ENCODE measurements at regions of chr16 and their contacts with region 1.

Region 1: DNA sequence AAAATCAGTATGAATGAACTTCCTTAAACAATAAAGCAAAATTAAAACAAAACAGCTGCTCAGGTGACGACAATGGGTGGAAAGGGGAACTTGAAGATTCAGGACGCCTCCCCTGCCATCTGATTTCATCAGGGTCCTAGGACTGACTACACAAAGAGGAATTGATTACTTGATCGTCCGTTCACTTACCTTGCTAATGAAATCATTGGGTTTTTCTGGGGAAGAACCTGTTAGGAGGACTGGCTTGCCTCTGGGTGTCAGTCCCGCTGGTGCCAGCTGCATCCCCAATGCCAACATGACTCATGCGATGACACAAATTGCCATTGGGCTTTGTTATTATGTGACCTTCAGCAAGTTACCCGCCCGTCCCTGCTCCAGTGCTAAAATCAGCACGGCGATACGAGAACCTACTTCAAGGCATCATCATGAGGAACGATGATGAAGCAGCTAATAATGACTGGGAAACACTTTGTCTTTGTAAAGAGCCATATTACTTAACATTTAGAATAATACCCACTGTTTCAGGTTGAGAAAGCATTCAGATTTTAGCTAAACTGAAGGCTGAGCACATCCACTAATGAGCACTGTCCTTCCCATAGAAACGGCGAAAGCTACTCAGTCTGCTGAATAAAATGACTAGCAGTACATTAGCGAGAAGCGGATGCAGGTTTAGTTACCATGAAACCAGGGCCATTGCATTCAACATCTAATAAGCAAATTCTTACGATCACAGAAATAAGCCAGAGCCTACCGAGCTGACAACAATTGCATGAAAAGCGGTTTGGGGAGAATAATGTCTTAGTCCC is 139.4 kb downstream of the ZFHX3 start:
- DNase-seq: peak; percentile 79 to 81 (median 81)
- H3K4me3 ChIP-seq: no peak overlapping the region
- H3K4me3 Mint-ChIP-seq: no peak overlapping the region
- H3K27ac ChIP-seq: peak overlapping the region in 1 of 2 donors; percentile 66
- H3K27ac Mint-ChIP-seq: peak overlapping the region; percentile 64 to 93 (median 90)
- H3K4me1 ChIP-seq: peaks cover 6 to 13% of the 10 kb centered on the region in 2 donors
- H3K4me1 Mint-ChIP-seq: peaks cover 15% of the 10 kb centered on the region
- H3K27me3 ChIP-seq: no peaks in the 10 kb centered on the region
- H3K27me3 Mint-ChIP-seq: peaks cover 0 to 3% (median 1%) of the 10 kb centered on the region in 3 donors
- CTCF ChIP-seq: no peak

Region 2: GRCh38 chr16:72924927-72925630 is 16.5 kb after region 1 on chr16:
- intact Hi-C with region 1: loop called in 1 of 2 experiments (anchors 2 kb)
- DNase-seq: no peak
- H3K4me3 ChIP-seq: no peak overlapping the region
- H3K4me3 Mint-ChIP-seq: no peak overlapping the region
- H3K27ac ChIP-seq: peak overlapping the region in 1 of 2 donors; percentile 10
- H3K27ac Mint-ChIP-seq: peak overlapping the region; percentile 29 to 92 (median 89)
- H3K4me1 ChIP-seq: peaks cover 36 to 41% of the 10 kb centered on the region in 2 donors
- H3K4me1 Mint-ChIP-seq: peaks cover 51% of the 10 kb centered on the region
- H3K27me3 ChIP-seq: no peaks in the 10 kb centered on the region
- H3K27me3 Mint-ChIP-seq: peaks cover 2 to 9% (median 4%) of the 10 kb centered on the region in 3 donors
- CTCF ChIP-seq: no peak

Region 3: GRCh38 chr16:73015612-73016487 is 107.3 kb after region 1 on chr16:
- intact Hi-C with region 1: no loop called
- DNase-seq: peak in 2 of 3 donors; percentile 21 to 34
- H3K4me3 ChIP-seq: no peak overlapping the region
- H3K4me3 Mint-ChIP-seq: peak overlapping the region in 1 of 2 donors; percentile 18
- H3K27ac ChIP-seq: peak overlapping the region in 1 of 2 donors; percentile 37
- H3K27ac Mint-ChIP-seq: peak overlapping the region in 4 of 7 donors; percentile 6 to 77 (median 20)
- H3K4me1 ChIP-seq: peaks cover 14 to 24% of the 10 kb centered on the region in 2 donors
- H3K4me1 Mint-ChIP-seq: peaks cover 39% of the 10 kb centered on the region
- H3K27me3 ChIP-seq: no peaks in the 10 kb centered on the region
- H3K27me3 Mint-ChIP-seq: peaks cover 2 to 5% (median 3%) of the 10 kb centered on the region in 3 donors
- CTCF ChIP-seq: no peak